MCF 10A (cell line): ENCODE measurements at regions of chr1 and their contacts with region 1.

Region 1: DNA sequence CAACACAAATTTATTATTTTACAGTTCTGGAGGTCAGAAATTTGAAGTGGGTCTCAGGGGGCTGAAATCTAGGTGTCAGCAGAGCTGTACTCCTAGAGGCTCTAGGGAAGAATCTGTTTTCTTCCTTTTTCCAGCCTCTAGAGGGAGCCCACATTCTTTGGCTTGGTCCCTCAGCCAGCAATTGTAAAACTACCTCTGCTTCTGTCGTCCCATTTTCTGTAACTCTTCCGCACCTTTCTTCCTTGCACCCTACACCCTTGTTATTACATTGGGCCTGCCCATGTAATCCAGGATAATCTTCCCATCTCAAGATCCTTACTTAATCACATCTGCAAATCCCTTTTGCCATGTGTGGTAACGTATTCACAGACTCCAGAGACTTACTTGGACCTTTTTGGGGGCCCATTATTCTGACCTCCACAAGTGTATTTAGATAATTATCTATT is 24.8 kb upstream of the THEM4 start:
- DNase-seq: peak; percentile 82
- H3K4me3 Mint-ChIP-seq: no peak overlapping the region
- H3K27ac Mint-ChIP-seq: no peak overlapping the region
- H3K4me1 Mint-ChIP-seq: peaks cover 11% of the 10 kb centered on the region
- H3K27me3 Mint-ChIP-seq: no peaks in the 10 kb centered on the region
- CTCF ChIP-seq: peak; percentile 96

Region 2: DNA sequence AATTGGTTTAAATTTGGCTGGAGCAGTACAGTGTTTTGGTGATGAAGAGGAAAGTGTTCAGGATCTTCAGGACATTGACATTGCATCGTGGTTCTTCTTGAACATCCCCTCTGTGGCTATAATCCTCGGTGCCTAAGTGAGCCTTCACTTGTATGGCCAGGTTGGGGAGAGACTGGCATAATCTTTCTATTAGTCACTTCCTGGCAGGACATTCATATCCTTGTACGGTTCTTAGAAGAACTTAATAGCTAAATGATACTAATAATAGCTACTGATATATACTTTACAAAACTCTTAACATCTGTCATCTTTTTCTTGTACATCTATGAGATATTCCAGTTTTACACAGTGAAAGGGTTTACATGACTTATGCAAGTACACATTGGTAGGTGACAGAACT is 253.3 kb before region 1 on chr1:
- CTCF ChIA-PET with region 1: no interaction called
- POLR2A ChIA-PET with region 1: no interaction called
- intact Hi-C with region 1: no loop called
- DNase-seq: peak; percentile 80
- H3K4me3 Mint-ChIP-seq: no peak overlapping the region
- H3K27ac Mint-ChIP-seq: peak overlapping the region; percentile 73
- H3K4me1 Mint-ChIP-seq: peaks cover 18% of the 10 kb centered on the region
- H3K27me3 Mint-ChIP-seq: no peaks in the 10 kb centered on the region
- CTCF ChIP-seq: no peak

Region 3: GRCh38 chr1:151888972-151889570 is 45.0 kb before region 1 on chr1:
- CTCF ChIA-PET with region 1: interaction called, 13 read pairs
- POLR2A ChIA-PET with region 1: interaction called, 3 read pairs
- intact Hi-C with region 1: loop called (anchors 1 kb)
- DNase-seq: peak; percentile 42
- H3K4me3 Mint-ChIP-seq: no peak overlapping the region
- H3K27ac Mint-ChIP-seq: no peak overlapping the region
- H3K4me1 Mint-ChIP-seq: peaks cover 30% of the 10 kb centered on the region
- H3K27me3 Mint-ChIP-seq: no peaks in the 10 kb centered on the region
- CTCF ChIP-seq: peak; percentile 53

Region 4: GRCh38 chr1:152013664-152014237 is 79.7 kb after region 1 on chr1:
- CTCF ChIA-PET with region 1: interaction called, 79 read pairs
- POLR2A ChIA-PET with region 1: interaction called, 3 read pairs
- intact Hi-C with region 1: loop called (anchors 1 kb)
- DNase-seq: peak; percentile 76
- H3K4me3 Mint-ChIP-seq: no peak overlapping the region
- H3K27ac Mint-ChIP-seq: no peak overlapping the region
- H3K4me1 Mint-ChIP-seq: peaks cover 12% of the 10 kb centered on the region
- H3K27me3 Mint-ChIP-seq: no peaks in the 10 kb centered on the region
- CTCF ChIP-seq: peak; percentile 75